Common myeloid progenitor, CD34-positive (primary cell): ENCODE measurements at regions of chr17 and their contacts with region 1.

Region 1: GRCh38 chr17:75393523-75394331 is 11.8 kb downstream of the GRB2 start:
- DNase-seq: peak; percentile 96 to 98 (median 98)
- H3K4me3 ChIP-seq: peak overlapping the region; percentile 39 to 87 (median 77)
- H3K27ac ChIP-seq: peak overlapping the region; percentile 55 to 80
- H3K4me1 ChIP-seq: peaks cover 17 to 40% (median 22%) of the 10 kb centered on the region in 4 experiments
- H3K27me3 ChIP-seq: no peaks in the 10 kb centered on the region

Region 2: GRCh38 chr17:75345514-75346167 is 48.1 kb before region 1 on chr17:
- CTCF ChIA-PET with region 1: interaction called, 10 read pairs
- POLR2A ChIA-PET with region 1: interaction called, 9 read pairs
- DNase-seq: peak in 2 of 3 donors; percentile 67 to 74
- H3K4me3 ChIP-seq: peak overlapping the region in 5 of 7 experiments; percentile 32 to 55 (median 37)
- H3K27ac ChIP-seq: peak overlapping the region; percentile 15 to 80
- H3K4me1 ChIP-seq: peaks cover 42 to 99% (median 84%) of the 10 kb centered on the region in 4 experiments
- H3K27me3 ChIP-seq: no peaks in the 10 kb centered on the region

Region 3: DNA sequence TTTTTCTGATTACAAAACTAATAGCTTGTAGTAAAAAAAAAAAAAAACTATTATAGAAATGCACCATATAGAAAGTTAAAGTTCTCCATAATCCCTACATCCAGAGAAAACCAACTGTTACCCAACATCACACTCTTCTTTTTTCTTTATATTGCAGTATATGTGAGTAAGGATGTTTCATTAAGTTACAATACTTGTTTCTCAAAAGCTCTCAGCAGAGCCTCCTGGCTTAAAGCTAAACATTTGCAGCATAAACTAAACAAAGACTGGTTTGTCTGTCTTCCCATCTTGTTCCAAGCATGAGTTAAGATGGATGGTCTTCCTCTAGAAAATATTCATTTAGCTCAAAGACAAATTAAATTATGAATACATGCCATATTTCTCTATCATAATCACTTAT is 13.4 kb before region 1 on chr17:
- CTCF ChIA-PET with region 1: interaction called, 14 read pairs
- POLR2A ChIA-PET with region 1: interaction called, 4 read pairs
- DNase-seq: no peak
- H3K4me3 ChIP-seq: no peak overlapping the region
- H3K27ac ChIP-seq: no peak overlapping the region
- H3K4me1 ChIP-seq: peaks cover 0 to 2% (median 0%) of the 10 kb centered on the region in 4 experiments
- H3K27me3 ChIP-seq: no peaks in the 10 kb centered on the region